ACHN (cell line): ENCODE measurements at regions of chr17 and their contacts with region 1.

Region 1: GRCh38 chr17:13594762-13595598 is 6.7 kb downstream of the HS3ST3A1 start:
- DNase-seq: peak; percentile 93

Region 2: DNA sequence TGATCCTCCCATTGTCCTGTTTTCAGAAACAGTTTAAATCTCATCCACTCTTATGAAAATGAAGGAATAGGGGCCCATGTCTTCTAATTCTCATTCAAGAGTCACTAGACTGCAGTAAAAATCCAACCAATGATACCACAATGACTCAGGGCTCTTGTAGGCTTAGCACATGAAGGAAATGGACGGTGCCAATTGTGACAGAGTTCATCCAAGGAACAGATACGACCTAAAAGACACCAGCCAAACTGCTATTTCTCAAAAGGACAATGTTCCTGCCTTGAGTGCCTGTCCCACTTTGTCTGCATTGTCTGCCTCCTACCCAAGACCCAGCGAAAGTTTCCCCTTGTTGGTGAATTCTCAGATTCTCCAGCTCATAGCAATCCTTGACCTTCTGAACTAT is 269.6 kb after region 1 on chr17:
- in situ Hi-C with region 1: no loop called
- DNase-seq: peak; percentile 7

Region 3: GRCh38 chr17:14300575-14301278 is 705.7 kb after region 1 on chr17 and contains the start of gene HS3ST3B1:
- in situ Hi-C with region 1: loop called (anchors 25 kb)
- DNase-seq: peak; percentile 100